HCT116 (cell line): ENCODE measurements at regions of chr2 and their contacts with region 1.

Region 1: DNA sequence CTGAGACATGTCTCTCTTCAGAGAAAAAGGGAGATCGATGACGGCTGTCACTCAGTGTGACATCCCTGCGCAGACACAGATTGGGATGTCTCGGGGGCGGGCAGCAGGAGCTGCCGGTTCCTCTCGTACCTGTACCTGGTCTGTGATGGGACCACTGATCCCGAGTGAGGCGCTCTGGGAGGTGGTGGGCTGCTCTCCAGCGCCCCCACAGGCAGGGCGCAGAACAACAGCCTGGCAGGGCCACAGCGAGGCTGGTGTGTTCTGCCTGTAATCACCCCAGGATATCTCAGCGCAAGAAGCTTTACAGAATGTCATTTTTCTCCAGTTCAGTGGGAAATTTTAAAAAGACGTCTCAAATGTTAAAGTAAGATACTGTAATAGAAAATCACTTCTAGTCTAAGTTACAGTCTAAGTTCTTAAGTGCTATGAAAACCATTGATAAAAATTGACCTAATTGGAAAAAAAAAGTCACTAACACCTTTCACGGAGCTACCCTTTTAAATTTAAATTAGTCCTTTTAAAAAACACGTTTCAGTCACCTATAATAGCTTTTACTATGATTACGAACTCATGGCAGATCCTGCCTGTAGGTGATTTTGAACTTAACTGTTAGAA is 189.8 kb downstream of the SNTG2 start:
- DNase-seq: no peak
- ATAC-seq: peak; percentile 99
- H3K4me3 ChIP-seq: no peak overlapping the region
- H3K27ac ChIP-seq: no peak overlapping the region
- H3K4me1 ChIP-seq: no peaks in the 10 kb centered on the region
- H3K27me3 ChIP-seq: peaks cover 3% of the 10 kb centered on the region; the same call in 1 of the 2 replicates
- CTCF ChIP-seq: peak; percentile 44 to 100 (median 93); a peak in 5 of 6 replicates
- POLR2A ChIP-seq: no peak
- RAD21 ChIP-seq: peak; percentile 38; the same call in 1 of the 2 replicates

Region 2: GRCh38 chr2:854460-854859 is 286.0 kb before region 1 on chr2:
- CTCF ChIA-PET with region 1: no interaction called
- POLR2A ChIA-PET with region 1: no interaction called
- RAD21 ChIA-PET with region 1: no interaction called
- intact Hi-C with region 1: loop called (anchors 5 kb)
- DNase-seq: peak; percentile 36
- ATAC-seq: peak; percentile 87
- H3K4me3 ChIP-seq: no peak overlapping the region
- H3K27ac ChIP-seq: no peak overlapping the region
- H3K4me1 ChIP-seq: no peaks in the 10 kb centered on the region
- H3K27me3 ChIP-seq: no peaks in the 10 kb centered on the region
- CTCF ChIP-seq: peak; percentile 54 to 79 (median 77); a peak in 5 of 6 replicates
- POLR2A ChIP-seq: no peak
- RAD21 ChIP-seq: peak; percentile 55

Region 3: DNA sequence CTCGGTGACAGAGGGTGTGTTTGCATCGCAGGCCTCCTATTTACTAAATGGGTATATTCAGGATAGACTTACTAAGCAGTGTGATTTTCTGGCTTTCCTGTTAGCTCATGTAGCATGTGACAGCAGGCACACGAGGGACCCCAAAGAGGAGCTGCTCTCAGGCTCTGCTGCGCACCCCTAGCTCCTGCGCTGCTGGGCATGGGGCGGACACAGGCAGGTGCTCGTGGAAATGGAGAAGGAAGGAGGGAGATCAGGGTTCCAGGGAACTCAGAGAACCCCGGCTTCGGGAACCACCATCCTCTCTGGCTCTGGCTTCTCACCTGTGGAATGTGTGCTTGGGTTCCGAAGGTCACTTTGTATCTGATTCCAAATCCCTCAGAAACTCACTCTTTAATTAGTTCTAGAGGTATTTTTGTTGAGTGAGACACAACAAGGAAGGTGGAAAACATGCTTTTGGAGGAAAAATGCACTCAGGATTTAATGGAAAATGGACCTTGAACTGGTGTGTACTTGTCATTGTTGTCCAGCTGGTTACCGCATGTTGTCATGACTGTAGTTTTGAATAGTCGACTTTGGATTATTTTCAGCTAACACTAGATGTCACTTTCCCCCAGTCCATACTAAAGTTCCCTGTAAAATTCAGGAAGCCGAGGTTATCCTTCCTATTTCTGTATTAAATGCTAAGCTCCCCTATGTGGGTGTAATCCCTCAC is 186.4 kb before region 1 on chr2:
- CTCF ChIA-PET with region 1: no interaction called
- POLR2A ChIA-PET with region 1: no interaction called
- RAD21 ChIA-PET with region 1: interaction called in 1 of 2 experiments, 3 read pairs
- intact Hi-C with region 1: loop called (anchors 1 kb)
- DNase-seq: no peak
- ATAC-seq: peak; percentile 62; the same call in 1 of the 2 replicates
- H3K4me3 ChIP-seq: no peak overlapping the region
- H3K27ac ChIP-seq: no peak overlapping the region
- H3K4me1 ChIP-seq: no peaks in the 10 kb centered on the region
- H3K27me3 ChIP-seq: peaks cover 12% of the 10 kb centered on the region; the same call in 1 of the 2 replicates
- CTCF ChIP-seq: peak in 2 of 3 experiments; percentile 12 to 22; a peak in 1 of 6 replicates
- POLR2A ChIP-seq: no peak
- RAD21 ChIP-seq: peak; percentile 62

Region 4: DNA sequence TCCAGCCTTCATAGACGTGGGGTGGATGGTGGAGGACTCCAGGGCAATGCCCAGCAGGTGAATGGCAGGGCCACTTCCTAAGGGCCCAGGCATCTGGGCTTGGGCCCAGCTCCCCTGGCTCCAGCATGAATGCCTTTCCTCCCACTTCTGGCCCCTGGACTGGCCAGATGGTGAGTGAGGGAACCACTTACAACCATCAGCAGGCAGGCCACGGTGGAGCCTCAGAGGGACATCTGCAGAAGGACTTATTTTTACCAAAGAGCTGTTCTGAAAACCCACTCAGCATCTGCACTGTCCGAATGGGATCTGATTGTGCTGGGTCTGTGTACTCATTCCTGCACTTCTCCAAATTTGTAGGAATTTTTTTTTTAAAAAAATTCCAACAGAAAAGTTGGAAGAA is 120.3 kb before region 1 on chr2:
- CTCF ChIA-PET with region 1: no interaction called
- POLR2A ChIA-PET with region 1: no interaction called
- RAD21 ChIA-PET with region 1: no interaction called
- intact Hi-C with region 1: no loop called
- DNase-seq: no peak
- ATAC-seq: no peak
- H3K4me3 ChIP-seq: no peak overlapping the region
- H3K27ac ChIP-seq: no peak overlapping the region
- H3K4me1 ChIP-seq: no peaks in the 10 kb centered on the region
- H3K27me3 ChIP-seq: 0 out of 2 replicates have a peak, but pooled peaks cover 3% of the 10 kb centered on the region
- CTCF ChIP-seq: no peak
- POLR2A ChIP-seq: no peak
- RAD21 ChIP-seq: no peak

Region 5: DNA sequence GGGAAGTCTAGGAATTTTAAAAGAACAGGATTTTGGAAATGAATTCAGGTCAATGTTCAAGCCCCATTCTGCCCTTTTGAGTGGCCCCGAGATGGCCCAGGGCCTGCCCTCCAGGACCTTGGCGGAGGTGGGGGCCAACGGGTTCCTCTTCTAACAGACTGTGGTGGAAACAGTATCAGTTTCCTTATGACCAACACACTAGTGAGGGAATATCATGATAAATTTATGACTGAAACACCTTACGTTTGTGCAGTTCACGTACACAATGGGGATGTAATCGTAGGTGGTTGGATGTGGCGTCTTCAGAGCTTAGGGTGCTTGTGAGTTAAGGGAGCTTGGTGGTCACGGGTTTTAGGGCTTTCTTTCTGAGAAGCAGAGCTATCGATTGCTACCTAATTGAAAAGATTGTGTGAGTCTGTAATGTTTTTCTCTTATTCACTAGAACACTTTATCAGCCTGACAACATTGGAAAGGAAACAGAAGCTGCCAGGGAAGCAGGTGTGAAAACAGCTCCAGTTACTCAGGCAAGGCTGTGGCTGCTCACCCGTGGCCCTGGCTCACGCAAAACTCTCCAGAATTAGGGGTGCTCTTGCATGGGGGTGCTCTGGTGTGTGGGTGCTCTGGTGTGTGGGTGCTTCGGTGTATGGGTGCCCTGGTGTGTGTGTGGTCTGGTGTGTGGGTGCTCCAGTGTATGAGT is 24.5 kb before region 1 on chr2:
- CTCF ChIA-PET with region 1: no interaction called
- POLR2A ChIA-PET with region 1: no interaction called
- RAD21 ChIA-PET with region 1: no interaction called
- intact Hi-C with region 1: no loop called
- DNase-seq: no peak
- ATAC-seq: no peak
- H3K4me3 ChIP-seq: no peak overlapping the region
- H3K27ac ChIP-seq: no peak overlapping the region
- H3K4me1 ChIP-seq: no peaks in the 10 kb centered on the region
- H3K27me3 ChIP-seq: peaks cover 7% of the 10 kb centered on the region; the same call in 1 of the 2 replicates
- CTCF ChIP-seq: no peak
- POLR2A ChIP-seq: no peak
- RAD21 ChIP-seq: no peak